ENCODE measurements at regions of chr2 and their contacts with region 1.

Region 1: DNA sequence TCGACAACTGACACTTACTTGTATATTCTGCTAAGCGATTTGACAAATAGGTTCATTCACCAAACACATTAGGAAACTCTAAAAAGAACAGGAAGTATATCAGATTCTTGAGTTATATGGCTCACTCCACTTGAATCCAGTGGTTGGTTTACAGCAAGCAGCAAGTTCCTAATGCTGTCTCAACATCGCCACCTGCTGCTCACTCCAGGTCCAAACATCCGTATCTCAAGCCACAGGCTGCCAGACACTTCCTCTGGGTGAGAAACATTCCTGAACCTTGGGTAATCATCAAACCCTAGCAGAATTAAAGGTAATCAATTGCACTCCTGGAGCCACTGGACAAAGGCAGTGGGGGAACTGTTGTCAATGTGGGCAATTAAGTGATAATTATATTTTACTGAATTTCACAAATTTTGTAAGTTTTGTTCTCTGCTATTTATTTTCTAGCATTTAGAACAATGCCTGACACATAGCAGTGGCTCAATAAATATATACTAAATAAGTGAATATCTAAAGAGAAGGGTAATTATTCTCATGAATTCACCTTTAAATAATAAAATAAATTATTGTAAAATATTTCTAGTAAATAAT is 107.1 kb upstream of the TTN start:
- DNase-seq: peak; percentile 89
- ATAC-seq: peak; percentile 92
- H3K4me3 Mint-ChIP-seq: no peak overlapping the region
- H3K27ac Mint-ChIP-seq: no peak overlapping the region
- H3K4me1 Mint-ChIP-seq: peaks cover 7% of the 10 kb centered on the region
- H3K27me3 Mint-ChIP-seq: no peaks in the 10 kb centered on the region
- CTCF ChIP-seq: peak; percentile 89

Region 2: DNA sequence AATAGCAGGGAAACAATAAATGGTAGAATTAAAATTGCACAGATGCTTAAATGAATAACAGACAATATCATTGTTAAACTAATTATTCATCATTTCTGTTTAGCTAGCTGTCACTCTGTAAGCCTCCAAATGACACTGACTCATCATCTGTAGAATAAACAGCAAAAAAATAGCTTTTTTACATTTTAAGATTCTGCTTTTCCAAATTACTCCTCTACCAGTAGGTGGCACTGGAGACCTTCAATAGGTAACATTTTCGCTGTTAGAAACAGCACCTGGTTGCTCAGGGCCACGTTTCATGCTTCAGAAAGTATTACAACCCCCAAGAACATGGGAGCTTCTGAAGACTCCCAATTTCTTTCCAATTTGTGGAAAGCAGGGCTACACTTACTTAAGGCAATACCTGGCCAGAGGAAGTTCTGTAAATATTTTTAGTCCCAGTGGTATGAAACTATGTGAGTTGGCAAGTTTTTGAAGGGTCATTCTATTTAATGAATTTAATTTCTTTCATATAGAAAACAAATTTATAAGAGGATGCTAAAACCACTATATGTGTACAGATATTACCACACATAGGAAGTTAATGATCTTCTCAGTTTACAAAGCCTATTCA is 152.5 kb before region 1 on chr2:
- CTCF ChIA-PET with region 1: interaction called, 9 read pairs
- POLR2A ChIA-PET with region 1: no interaction called
- intact Hi-C with region 1: loop called (anchors 10 kb)
- DNase-seq: peak; percentile 37
- ATAC-seq: peak; percentile 80
- H3K4me3 Mint-ChIP-seq: no peak overlapping the region
- H3K27ac Mint-ChIP-seq: no peak overlapping the region
- H3K4me1 Mint-ChIP-seq: no peaks in the 10 kb centered on the region
- H3K27me3 Mint-ChIP-seq: no peaks in the 10 kb centered on the region
- CTCF ChIP-seq: peak; percentile 84

Region 3: GRCh38 chr2:178776751-178777150 is 137.6 kb before region 1 on chr2:
- CTCF ChIA-PET with region 1: no interaction called
- POLR2A ChIA-PET with region 1: no interaction called
- intact Hi-C with region 1: no loop called
- DNase-seq: no peak
- ATAC-seq: no peak
- H3K4me3 Mint-ChIP-seq: no peak overlapping the region
- H3K27ac Mint-ChIP-seq: no peak overlapping the region
- H3K4me1 Mint-ChIP-seq: no peaks in the 10 kb centered on the region
- H3K27me3 Mint-ChIP-seq: no peaks in the 10 kb centered on the region
- CTCF ChIP-seq: no peak

Region 4: DNA sequence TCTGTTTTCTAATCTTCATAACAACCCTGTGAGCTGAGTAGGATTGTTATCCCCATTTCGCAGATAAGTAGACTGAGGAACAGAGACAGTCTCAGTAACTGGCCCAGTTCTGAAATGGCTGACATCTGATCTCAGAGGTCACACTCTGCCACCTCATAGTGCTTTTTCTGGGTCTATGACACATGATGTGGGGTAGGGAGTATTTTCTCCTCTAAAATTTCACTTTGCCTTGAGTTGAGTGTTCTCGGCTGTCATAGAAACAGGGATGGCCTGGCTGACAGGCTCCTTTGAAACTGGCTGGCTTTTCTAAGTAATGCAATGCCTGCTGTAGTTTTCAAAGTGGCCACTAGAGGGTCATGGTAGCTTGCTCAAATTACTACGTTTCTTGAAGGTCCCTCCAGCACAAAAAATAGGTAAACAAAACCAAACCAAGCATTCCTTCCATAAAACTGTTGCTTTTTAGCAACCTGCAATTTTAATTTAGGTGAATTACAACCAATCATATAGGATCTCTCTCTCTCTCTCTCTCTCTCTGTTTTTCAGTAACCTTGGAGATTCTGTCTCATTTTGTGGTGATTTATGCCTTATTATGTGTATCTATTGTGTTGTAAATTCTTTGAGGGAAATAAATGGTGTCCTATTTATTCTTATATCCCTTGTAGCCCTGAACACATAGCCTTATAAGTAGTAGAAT is 22.9 kb before region 1 on chr2:
- CTCF ChIA-PET with region 1: interaction called, 16 read pairs
- POLR2A ChIA-PET with region 1: interaction called, 3 read pairs
- intact Hi-C with region 1: no loop called
- DNase-seq: peak; percentile 83
- ATAC-seq: peak; percentile 98
- H3K4me3 Mint-ChIP-seq: no peak overlapping the region
- H3K27ac Mint-ChIP-seq: no peak overlapping the region
- H3K4me1 Mint-ChIP-seq: peaks cover 3% of the 10 kb centered on the region
- H3K27me3 Mint-ChIP-seq: no peaks in the 10 kb centered on the region
- CTCF ChIP-seq: peak; percentile 95

Region 5: DNA sequence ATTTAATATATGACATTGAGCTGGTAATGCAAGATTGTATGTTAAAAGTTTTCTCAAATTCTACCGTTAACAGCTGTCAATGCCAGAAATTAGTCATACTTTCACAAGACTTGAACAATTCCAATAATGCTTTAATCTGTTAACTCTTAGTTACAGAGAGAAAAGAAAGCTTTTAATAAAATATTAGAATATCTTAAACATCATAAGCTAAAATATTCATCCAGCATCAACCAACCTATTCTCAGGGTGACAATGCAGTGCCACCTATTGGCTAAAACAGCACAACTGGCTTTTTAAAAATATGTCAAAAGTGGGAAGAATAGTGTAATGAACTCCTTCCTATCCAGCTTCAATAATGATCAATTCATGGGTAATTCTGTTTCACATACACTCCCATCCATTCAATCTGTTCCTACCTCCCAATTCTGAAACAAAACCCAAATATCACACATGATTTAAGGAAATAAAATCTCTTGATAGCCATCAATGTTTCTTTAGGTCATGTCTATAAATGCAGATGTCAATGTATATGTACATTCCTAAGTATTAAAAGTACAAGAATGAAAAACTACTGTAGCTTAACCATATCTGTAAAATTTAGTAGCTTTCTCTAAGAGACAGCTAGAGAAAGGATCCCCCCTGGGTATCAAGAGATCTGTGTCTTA is 215.4 kb after region 1 on chr2:
- CTCF ChIA-PET with region 1: interaction called, 17 read pairs
- POLR2A ChIA-PET with region 1: no interaction called
- intact Hi-C with region 1: no loop called
- DNase-seq: peak; percentile 22
- ATAC-seq: no peak
- H3K4me3 Mint-ChIP-seq: no peak overlapping the region
- H3K27ac Mint-ChIP-seq: no peak overlapping the region
- H3K4me1 Mint-ChIP-seq: no peaks in the 10 kb centered on the region
- H3K27me3 Mint-ChIP-seq: no peaks in the 10 kb centered on the region
- CTCF ChIP-seq: peak; percentile 75